Mammary epithelial cell (primary cell): ENCODE measurements at regions of chr17 and their contacts with region 1.

Region 1: DNA sequence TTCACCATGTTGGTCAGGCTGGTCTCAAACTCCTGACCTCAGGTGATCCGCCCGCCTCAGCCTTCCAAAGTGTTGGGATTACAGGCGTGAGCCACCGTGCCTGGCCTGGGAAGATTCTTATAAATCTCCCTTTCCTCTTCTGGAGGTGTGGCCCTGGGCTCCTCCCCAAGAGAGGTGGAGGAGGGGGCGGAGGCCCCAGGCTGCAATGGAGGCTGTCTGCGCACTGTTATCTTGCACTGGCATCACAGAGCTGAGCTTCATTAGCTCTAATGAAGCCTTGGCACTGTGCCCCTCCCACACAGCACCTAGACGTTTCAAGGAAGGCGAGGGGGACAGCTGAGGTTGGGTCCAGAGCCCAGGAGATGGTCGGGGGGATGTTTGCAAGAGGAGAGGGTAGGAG is 7.5 kb downstream of the ARHGAP23 start:
- DNase-seq: no peak
- H3K4me3 ChIP-seq: no peak overlapping the region
- H3K27ac ChIP-seq: no peak overlapping the region
- H3K4me1 ChIP-seq: no peaks in the 10 kb centered on the region
- H3K27me3 ChIP-seq: no peaks in the 10 kb centered on the region
- CTCF ChIP-seq: no peak

Region 2: DNA sequence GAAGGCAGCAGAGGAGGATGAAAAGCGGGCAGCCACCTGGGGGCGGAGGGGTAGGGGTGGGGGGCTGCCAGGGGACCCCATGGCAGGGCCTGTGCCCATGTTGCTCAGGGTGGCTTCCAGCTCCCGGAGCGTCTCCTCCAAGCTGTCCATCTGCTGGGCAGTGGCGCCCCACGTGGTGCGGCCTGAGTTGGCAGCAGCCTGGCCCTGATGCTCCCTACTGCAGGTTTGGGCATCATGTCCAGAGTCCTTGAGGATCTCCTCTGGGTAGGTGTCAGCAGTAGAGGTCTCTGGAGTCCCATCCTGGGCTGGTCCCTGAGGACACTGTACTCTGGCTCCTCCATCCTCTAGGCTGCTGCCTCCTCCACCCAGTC is 109.0 kb after region 1 on chr17:
- CTCF ChIA-PET with region 1: no interaction called
- dilution Hi-C with region 1: loop called (anchors 5 kb)
- in situ Hi-C with region 1: no loop called
- intact Hi-C with region 1: no loop called
- DNase-seq: no peak
- H3K4me3 ChIP-seq: no peak overlapping the region
- H3K27ac ChIP-seq: no peak overlapping the region
- H3K4me1 ChIP-seq: no peaks in the 10 kb centered on the region
- H3K27me3 ChIP-seq: no peaks in the 10 kb centered on the region
- CTCF ChIP-seq: no peak

Region 3: GRCh38 chr17:38617011-38617867 is 181.4 kb after region 1 on chr17:
- CTCF ChIA-PET with region 1: no interaction called
- dilution Hi-C with region 1: loop called (anchors 5 kb)
- in situ Hi-C with region 1: no loop called
- intact Hi-C with region 1: no loop called
- DNase-seq: no peak
- H3K4me3 ChIP-seq: no peak overlapping the region
- H3K27ac ChIP-seq: no peak overlapping the region
- H3K4me1 ChIP-seq: no peaks in the 10 kb centered on the region
- H3K27me3 ChIP-seq: peaks cover 4% of the 10 kb centered on the region
- CTCF ChIP-seq: no peak